HCT116 (cell line): ENCODE measurements at regions of chr5 and their contacts with region 1.

Region 1: GRCh38 chr5:135191084-135191826 is 157.2 kb upstream of the PITX1 start:
- DNase-seq: peak; percentile 57
- ATAC-seq: peak; percentile 97
- H3K4me3 ChIP-seq: peak overlapping the region; percentile 40 to 53
- H3K27ac ChIP-seq: no peak overlapping the region; the same call in 1 of the 2 replicates
- H3K4me1 ChIP-seq: peaks cover 2 to 17% of the 10 kb centered on the region in 2 experiments
- H3K27me3 ChIP-seq: no peaks in the 10 kb centered on the region
- CTCF ChIP-seq: peak; percentile 90 to 96 (median 93)
- POLR2A ChIP-seq: no peak
- RAD21 ChIP-seq: peak; percentile 99

Region 2: GRCh38 chr5:135010502-135011354 is 180.5 kb before region 1 on chr5:
- CTCF ChIA-PET with region 1: interaction called, 3 read pairs
- POLR2A ChIA-PET with region 1: no interaction called
- RAD21 ChIA-PET with region 1: no interaction called
- intact Hi-C with region 1: loop called (anchors 1 kb)
- DNase-seq: no peak
- ATAC-seq: peak; percentile 58; the same call in 1 of the 2 replicates
- H3K4me3 ChIP-seq: no peak overlapping the region
- H3K27ac ChIP-seq: no peak overlapping the region
- H3K4me1 ChIP-seq: no peaks in the 10 kb centered on the region
- H3K27me3 ChIP-seq: no peaks in the 10 kb centered on the region
- CTCF ChIP-seq: peak; percentile 33 to 58 (median 39); a peak in 5 of 6 replicates
- POLR2A ChIP-seq: no peak
- RAD21 ChIP-seq: peak; percentile 67

Region 3: DNA sequence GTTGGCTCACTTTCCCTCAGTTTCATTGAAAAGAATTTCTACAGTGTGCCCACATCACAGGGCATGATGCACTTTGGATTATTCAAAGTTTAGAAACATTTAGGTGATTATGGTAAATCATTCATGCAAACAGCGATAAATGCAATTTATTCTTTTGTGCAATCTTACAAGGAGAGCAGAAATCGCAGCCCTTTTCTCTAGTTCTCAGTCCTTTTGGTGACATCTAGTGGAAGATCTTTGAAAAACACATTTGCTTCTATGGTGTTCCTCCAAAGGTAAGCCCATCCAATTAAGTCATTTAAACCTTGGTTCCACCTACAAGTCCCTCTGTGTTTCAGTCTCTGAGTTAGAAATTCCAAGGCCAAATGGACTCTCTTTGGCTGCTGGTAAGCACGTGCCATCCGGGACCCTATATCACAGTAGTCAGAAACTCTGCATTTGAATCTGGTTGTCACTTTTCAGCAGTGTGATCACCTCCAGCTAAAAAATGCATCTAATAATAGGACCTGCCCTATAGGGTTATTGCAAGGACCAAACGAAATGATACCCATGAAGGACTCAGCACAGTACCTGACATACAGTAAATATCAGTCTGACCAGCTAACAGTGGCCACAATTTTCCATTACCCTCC is 141.4 kb after region 1 on chr5:
- CTCF ChIA-PET with region 1: no interaction called
- POLR2A ChIA-PET with region 1: no interaction called
- RAD21 ChIA-PET with region 1: no interaction called
- intact Hi-C with region 1: loop called (anchors 1 kb)
- DNase-seq: peak; percentile 49
- ATAC-seq: peak; percentile 73
- H3K4me3 ChIP-seq: no peak overlapping the region
- H3K27ac ChIP-seq: no peak overlapping the region
- H3K4me1 ChIP-seq: no peaks in the 10 kb centered on the region
- H3K27me3 ChIP-seq: no peaks in the 10 kb centered on the region
- CTCF ChIP-seq: peak; percentile 53 to 74 (median 68)
- POLR2A ChIP-seq: no peak
- RAD21 ChIP-seq: peak; percentile 88

Region 4: GRCh38 chr5:135560858-135561257 is 369.6 kb after region 1 on chr5:
- CTCF ChIA-PET with region 1: no interaction called
- POLR2A ChIA-PET with region 1: no interaction called
- RAD21 ChIA-PET with region 1: no interaction called
- intact Hi-C with region 1: no loop called
- DNase-seq: peak; percentile 65
- ATAC-seq: peak; percentile 97
- H3K4me3 ChIP-seq: no peak overlapping the region
- H3K27ac ChIP-seq: no peak overlapping the region
- H3K4me1 ChIP-seq: peaks cover 0 to 7% of the 10 kb centered on the region in 2 experiments; a peak in 1 of 4 replicates
- H3K27me3 ChIP-seq: no peaks in the 10 kb centered on the region
- CTCF ChIP-seq: peak; percentile 84 to 90 (median 84)
- POLR2A ChIP-seq: no peak
- RAD21 ChIP-seq: peak; percentile 88